ENCODE measurements at regions of chr3 and their contacts with region 1.

Region 1: GRCh38 chr3:197511130-197511529 is 44.6 kb downstream of the BDH1 start:
- DNase-seq: peak in 4 of 10 donors; percentile 66 to 83 (median 75)
- H3K4me3 ChIP-seq: no peak overlapping the region
- H3K27ac ChIP-seq: peak overlapping the region in 56 of 59 donors; percentile 3 to 97 (median 76)
- H3K27me3 ChIP-seq: no peaks in the 10 kb centered on the region
- CTCF ChIP-seq: peak in 1 of 56 donors; percentile 7

Region 2: DNA sequence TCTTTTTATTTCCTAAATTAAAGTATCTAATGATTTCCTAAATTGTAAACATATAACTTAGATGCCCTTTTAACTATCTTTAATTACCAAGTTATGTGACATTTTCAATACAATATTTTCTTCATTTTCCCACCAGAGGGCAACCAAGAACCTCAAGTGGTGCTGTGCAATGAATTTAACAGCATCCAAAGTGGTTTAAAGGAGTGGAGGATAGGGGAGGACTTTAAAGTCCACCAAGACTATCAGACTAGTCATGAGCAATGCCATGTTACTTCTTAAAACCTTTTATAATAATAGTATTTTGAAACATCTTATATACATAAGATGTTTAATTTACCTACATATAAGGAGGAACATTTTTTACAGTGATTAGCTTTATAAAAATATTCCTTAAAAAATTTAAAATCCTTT is 287.1 kb before region 1 on chr3:
- intact Hi-C with region 1: loop called (anchors 5 to 10 kb)
- DNase-seq: no peak
- H3K4me3 ChIP-seq: peak overlapping the region in 1 of 59 donors; percentile 17
- H3K27ac ChIP-seq: peak overlapping the region in 16 of 59 donors; percentile 3 to 62 (median 22)
- H3K27me3 ChIP-seq: no peaks in the 10 kb centered on the region
- CTCF ChIP-seq: peak; percentile 49 to 89 (median 72)

Region 3: GRCh38 chr3:197256836-197257444 is 254.2 kb before region 1 on chr3:
- intact Hi-C with region 1: loop called (anchors 1 kb)
- DNase-seq: peak in 2 of 10 donors; percentile 40 to 46
- H3K4me3 ChIP-seq: peak overlapping the region in 23 of 59 donors; percentile 8 to 54 (median 42)
- H3K27ac ChIP-seq: peak overlapping the region in 55 of 59 donors; percentile 1 to 79 (median 59)
- H3K27me3 ChIP-seq: no peaks in the 10 kb centered on the region
- CTCF ChIP-seq: peak; percentile 64 to 98 (median 82)

Region 4: GRCh38 chr3:197298341-197298857 is 212.7 kb before region 1 on chr3 and contains the start of gene DLG1:
- intact Hi-C with region 1: loop called in 1 of 2 experiments (anchors 2 kb)
- DNase-seq: peak in 9 of 10 donors; percentile 38 to 74 (median 60)
- H3K4me3 ChIP-seq: peak within 1 kb of the TSS; percentile 65 to 98 (median 93)
- H3K27ac ChIP-seq: peak within 1 kb of the TSS; percentile 65 to 99 (median 95)
- H3K27me3 ChIP-seq: no peaks in the 10 kb centered on the region
- CTCF ChIP-seq: peak in 1 of 56 donors; percentile 7
- total RNA-seq, gene DLG1: 124 to 310 (median 169) TPM

Region 5: DNA sequence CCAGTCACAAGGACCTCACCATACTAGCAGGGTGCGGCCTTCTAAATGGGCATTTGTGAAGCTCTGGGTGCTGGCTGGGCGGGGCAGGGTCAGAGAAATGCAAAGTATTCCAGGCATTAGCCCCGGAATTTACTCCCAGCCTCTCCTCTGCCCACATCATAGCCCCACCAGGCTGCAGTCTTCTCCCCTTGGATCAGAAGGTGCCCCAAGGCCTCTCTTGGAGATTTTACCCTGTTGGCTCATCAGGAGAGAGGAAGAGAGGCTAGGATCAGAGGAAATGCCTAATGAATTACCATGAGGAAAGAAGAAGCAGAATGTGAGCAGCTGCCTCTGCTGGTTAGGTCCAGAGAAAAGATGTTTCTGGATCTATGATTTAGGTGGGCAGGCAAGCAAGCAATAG is 21.0 kb before region 1 on chr3:
- intact Hi-C with region 1: no loop called
- DNase-seq: no peak
- H3K4me3 ChIP-seq: no peak overlapping the region
- H3K27ac ChIP-seq: no peak overlapping the region
- H3K27me3 ChIP-seq: no peaks in the 10 kb centered on the region
- CTCF ChIP-seq: no peak

Region 6: GRCh38 chr3:197554562-197555280 is 43.6 kb after region 1 on chr3:
- intact Hi-C with region 1: loop called in 1 of 2 experiments (anchors 5 kb)
- DNase-seq: peak; percentile 96 to 99 (median 98)
- H3K4me3 ChIP-seq: peak overlapping the region; percentile 59 to 99 (median 92)
- H3K27ac ChIP-seq: peak overlapping the region; percentile 62 to 99 (median 97)
- H3K27me3 ChIP-seq: no peaks in the 10 kb centered on the region
- CTCF ChIP-seq: peak; percentile 19 to 82 (median 66)